ENCODE measurements at regions of chr16 and their contacts with region 1.

Region 1: GRCh38 chr16:28846080-28846932 is at the start of gene TUFM:
- DNase-seq: peak; percentile 93 to 99 (median 98)
- ATAC-seq: peak; percentile 92 to 94
- H3K4me3 Mint-ChIP-seq: peak within 1 kb of the TSS; percentile 88 to 97 (median 92)
- H3K27ac Mint-ChIP-seq: peak within 1 kb of the TSS; percentile 90 to 98 (median 96)
- H3K4me1 Mint-ChIP-seq: peaks cover 25 to 38% (median 31%) of the 10 kb centered on the region in 4 donors
- H3K27me3 Mint-ChIP-seq: no peaks in the 10 kb centered on the region
- polyA plus RNA-seq, gene TUFM: 141 to 155 (median 152) TPM

Region 2: DNA sequence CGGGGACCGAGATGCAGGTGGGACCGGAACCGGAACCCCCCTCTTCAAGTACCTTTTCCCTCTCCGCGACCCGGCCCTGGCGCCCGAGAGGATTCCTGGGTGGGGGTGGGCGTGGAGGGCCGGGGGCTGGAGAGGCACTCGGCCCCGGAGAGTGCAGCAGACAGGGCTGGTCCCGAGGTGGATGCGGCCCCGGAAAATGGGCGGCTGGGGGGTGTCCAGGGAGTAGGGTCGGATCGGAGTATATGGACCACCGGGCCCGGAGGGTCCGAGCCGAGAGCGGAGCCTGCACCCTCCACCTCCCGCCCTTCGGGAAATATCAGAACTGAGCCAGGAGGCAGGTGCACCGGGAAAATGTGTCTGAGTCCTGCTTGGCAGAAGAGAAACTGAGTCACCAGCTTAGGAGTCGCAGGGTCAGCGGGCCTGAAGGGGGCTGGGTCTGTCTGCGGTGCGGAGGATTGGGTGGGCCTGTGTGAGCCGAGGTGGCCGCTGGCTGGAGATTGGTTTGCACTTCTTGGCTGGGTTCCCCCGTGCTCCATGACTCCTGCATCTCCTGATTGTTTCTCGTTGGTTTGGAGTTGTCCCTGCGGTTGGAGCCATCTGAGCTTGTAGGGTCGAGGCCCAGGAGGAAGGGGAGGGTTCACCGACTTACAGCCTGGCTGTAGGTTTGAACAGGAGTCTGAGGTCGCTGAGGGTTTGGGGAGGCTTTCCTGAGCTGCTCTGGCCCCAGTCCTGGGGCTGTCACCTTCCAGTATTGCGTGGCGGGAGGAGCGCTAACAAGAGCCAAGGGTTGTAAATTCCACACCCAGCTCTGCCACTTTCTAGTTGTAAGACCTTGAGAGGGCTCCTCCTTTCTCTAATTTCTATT is 17.9 kb after region 1 on chr16:
- POLR2A ChIA-PET with region 1: interaction called, 165 read pairs
- DNase-seq: peak in 5 of 10 donors; percentile 17 to 29 (median 21)
- ATAC-seq: no peak
- H3K4me3 Mint-ChIP-seq: peak overlapping the region; percentile 98 to 100 (median 98)
- H3K27ac Mint-ChIP-seq: peak overlapping the region; percentile 96 to 100 (median 99)
- H3K4me1 Mint-ChIP-seq: peaks cover 17 to 39% (median 34%) of the 10 kb centered on the region in 4 donors
- H3K27me3 Mint-ChIP-seq: no peaks in the 10 kb centered on the region

Region 3: DNA sequence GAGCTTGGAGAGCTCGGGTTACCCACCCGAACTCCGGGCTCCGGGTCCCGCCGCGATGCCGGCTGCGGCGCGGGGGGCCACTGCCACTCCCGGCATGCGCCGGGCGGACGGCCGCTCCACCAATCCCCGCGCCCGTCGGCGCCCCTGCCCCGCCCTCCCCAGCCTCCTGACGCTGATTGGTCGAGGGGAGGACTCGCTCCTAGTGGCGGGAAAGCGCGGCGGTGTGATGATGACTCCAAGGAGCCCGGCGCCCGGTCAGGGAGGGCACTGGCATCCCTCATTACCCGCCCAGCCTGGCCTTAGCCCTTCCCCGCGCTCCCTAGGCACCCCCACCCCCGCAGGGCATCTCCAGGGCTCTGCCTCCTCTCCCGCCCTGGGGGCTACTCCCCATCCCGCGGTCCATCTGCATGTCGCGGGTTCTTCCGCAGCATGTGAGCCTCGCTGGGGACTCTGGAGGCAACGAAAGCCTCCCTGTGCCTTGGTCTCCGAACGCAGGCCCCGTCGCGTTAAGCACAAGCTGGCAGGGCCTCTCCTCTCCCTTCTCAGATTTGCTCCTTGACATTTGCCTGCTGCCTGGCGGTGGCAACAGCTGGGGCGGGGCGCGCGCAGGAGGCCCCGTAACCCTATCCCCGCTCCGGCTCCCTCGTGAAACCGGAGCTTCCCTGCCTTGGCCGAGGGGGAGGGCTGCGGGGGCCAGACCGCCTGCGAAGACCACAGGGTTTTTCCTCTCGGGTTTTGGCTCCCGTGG is 33.7 kb after region 1 on chr16:
- POLR2A ChIA-PET with region 1: interaction called, 10 read pairs
- DNase-seq: peak; percentile 71 to 94 (median 83)
- ATAC-seq: peak; percentile 98
- H3K4me3 Mint-ChIP-seq: peak overlapping the region; percentile 67 to 92 (median 87)
- H3K27ac Mint-ChIP-seq: peak overlapping the region in 4 of 10 donors; percentile 53 to 86 (median 65)
- H3K4me1 Mint-ChIP-seq: peaks cover 7 to 18% (median 15%) of the 10 kb centered on the region in 4 donors
- H3K27me3 Mint-ChIP-seq: peaks cover 4 to 13% (median 11%) of the 10 kb centered on the region in 5 donors

Region 4: GRCh38 chr16:28902909-28903308 is 56.6 kb after region 1 on chr16:
- POLR2A ChIA-PET with region 1: no interaction called
- DNase-seq: no peak
- ATAC-seq: peak; percentile 12 to 20
- H3K4me3 Mint-ChIP-seq: no peak overlapping the region
- H3K27ac Mint-ChIP-seq: peak overlapping the region in 3 of 10 donors; percentile 37 to 89 (median 74)
- H3K4me1 Mint-ChIP-seq: peaks cover 3 to 11% (median 5%) of the 10 kb centered on the region in 4 donors
- H3K27me3 Mint-ChIP-seq: no peaks in the 10 kb centered on the region

Region 5: GRCh38 chr16:28915181-28915580 is 68.9 kb after region 1 on chr16:
- POLR2A ChIA-PET with region 1: no interaction called
- DNase-seq: no peak
- ATAC-seq: no peak
- H3K4me3 Mint-ChIP-seq: no peak overlapping the region
- H3K27ac Mint-ChIP-seq: peak overlapping the region in 2 of 10 donors; percentile 47 to 89
- H3K4me1 Mint-ChIP-seq: peaks cover 0 to 3% (median 0%) of the 10 kb centered on the region in 4 donors
- H3K27me3 Mint-ChIP-seq: no peaks in the 10 kb centered on the region

Region 6: GRCh38 chr16:28950648-28951409 is 104.5 kb after region 1 on chr16 and contains the start of gene NFATC2IP:
- POLR2A ChIA-PET with region 1: interaction called, 11 read pairs
- DNase-seq: peak; percentile 97 to 100 (median 99)
- ATAC-seq: peak; percentile 95 to 96
- H3K4me3 Mint-ChIP-seq: peak within 1 kb of the TSS; percentile 87 to 100 (median 96)
- H3K27ac Mint-ChIP-seq: peak within 1 kb of the TSS; percentile 90 to 99 (median 94)
- H3K4me1 Mint-ChIP-seq: peaks cover 15 to 36% (median 31%) of the 10 kb centered on the region in 4 donors
- H3K27me3 Mint-ChIP-seq: no peaks in the 10 kb centered on the region
- polyA plus RNA-seq, gene NFATC2IP: 22.8 to 30.2 (median 28.7) TPM

Region 7: DNA sequence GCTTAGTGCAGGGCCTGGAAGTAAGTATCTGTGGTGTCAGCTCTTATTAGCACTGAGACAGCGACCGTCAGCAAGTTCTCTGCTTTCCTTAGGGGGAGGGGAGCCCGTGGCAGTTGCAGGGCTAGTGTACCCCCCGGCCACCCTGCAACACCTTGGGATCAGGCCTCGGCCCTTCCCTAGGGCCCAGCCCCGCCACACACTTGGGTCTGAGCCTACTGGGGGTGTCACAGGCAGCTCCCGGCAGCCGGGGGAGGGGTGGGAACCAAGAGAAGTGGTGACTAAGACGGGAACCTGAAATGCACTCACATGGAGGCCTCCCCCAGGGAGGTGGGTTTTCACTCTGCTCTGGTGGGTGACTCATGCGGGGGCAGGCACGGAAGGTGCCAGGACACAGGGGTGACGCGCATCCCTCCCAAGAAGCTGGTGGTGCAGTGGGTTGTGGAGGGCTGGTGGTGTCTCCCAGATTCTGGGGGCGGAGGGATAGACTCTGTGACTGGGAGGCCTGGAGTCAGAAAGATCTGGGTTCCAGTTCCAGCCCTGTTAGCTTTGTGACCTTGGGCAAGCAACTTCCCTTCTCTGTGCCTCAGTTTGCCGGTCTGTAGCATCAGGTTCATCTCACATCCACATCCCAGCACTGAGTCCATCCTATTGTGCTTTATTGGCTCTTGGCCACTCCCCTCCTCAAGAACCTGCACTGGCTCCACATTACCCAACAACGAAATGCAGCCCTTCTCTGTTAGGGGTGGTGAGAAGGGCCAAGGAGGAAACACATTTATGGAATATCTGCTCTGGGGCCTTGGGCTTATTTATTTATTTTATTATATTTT is 183.1 kb after region 1 on chr16:
- POLR2A ChIA-PET with region 1: interaction called, 10 read pairs
- DNase-seq: peak; percentile 22 to 80 (median 36)
- ATAC-seq: peak; percentile 79 to 90
- H3K4me3 Mint-ChIP-seq: peak overlapping the region in 7 of 10 donors; percentile 6 to 47 (median 34)
- H3K27ac Mint-ChIP-seq: peak overlapping the region; percentile 45 to 95 (median 79)
- H3K4me1 Mint-ChIP-seq: peaks cover 21 to 44% (median 38%) of the 10 kb centered on the region in 4 donors
- H3K27me3 Mint-ChIP-seq: no peaks in the 10 kb centered on the region

Measured in naive thymus-derived CD8-positive, alpha-beta T cell (primary cell).